Mammary epithelial cell (primary cell): ENCODE measurements at regions of chr16 and their contacts with region 1.

Region 1: DNA sequence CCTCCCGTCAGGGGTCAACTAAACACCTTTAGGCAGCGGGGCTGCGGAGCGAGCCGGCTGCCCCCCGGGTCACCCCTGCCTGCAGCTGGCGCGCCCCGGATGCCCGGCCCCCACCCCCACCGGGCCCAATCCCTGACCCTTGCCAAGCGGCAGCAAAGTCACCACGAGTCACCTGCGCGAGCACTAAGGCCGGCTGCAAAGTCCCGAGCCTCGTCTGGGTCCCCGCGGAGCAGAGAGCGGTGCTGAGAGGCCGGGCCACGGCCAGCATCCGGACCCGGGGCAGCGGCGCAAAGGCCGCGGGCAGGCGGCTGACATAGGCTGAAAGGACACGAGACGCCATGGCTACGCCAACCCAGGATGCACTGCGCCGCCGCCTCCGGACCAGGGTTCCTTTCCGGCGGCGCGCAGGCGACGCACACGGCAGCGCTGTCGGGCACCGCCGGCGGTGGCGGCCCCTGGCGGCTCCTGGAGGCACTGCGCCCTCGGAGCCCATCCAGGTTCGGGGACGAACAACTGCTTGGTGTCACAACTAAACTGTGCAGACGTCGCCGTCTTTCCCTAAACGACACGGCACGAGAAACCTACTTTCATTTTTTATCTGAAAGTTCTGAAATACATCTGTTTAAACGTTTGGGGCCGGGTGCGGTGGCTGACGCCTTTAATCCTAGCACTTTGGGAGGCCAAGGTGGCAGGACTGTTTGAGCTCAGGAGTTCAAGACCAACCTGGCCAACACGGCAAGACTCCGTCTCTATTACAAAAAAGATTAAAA is at the start of gene NDUFAB1:
- DNase-seq: peak; percentile 85
- H3K4me3 ChIP-seq: peak within 1 kb of the TSS; percentile 86 to 96 (median 88)
- H3K27ac ChIP-seq: peak within 1 kb of the TSS; percentile 60
- H3K4me1 ChIP-seq: peaks cover 7% of the 10 kb centered on the region
- H3K27me3 ChIP-seq: no peaks in the 10 kb centered on the region
- CTCF ChIP-seq: peak; percentile 90 to 94
- total RNA-seq, gene NDUFAB1: 70.2 to 86.6 TPM

Region 2: DNA sequence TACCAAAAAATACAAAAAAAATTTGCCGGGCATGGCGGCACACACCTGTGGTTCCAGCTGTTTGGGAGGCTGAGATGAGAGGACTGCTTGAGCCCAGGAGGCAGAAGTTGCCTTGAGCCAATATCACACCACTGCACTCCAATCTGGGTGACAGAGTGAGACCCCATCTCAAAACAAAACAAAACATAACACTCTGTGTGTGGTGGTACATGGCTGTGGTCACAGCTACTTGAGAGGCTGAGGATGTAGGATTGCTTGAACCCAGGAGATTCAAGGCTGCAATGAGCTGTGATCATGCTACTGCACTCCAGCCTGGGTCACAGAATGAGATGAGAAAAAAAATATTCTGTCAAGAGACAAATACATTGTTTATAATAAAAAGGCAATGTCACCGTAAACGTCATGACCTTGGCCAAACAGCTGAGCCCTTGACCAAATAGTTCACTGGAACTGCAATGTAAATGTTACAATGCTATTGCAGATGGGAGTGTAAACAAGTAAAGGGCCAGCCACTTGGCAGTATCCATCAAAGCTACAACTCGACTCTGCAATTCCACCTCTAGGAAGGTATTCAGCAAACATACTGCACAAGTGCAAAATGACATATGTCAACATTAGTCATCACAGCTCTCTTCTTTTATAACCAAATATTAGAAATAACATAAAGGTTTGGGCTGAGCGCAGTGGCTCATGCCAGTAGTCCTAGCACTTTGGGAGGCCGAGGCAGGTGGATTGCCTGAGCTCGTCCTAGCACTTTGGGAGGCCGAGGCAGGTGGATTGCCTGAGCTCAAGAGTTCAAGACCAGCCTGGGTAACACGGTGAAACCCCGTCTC is 55.9 kb before region 1 on chr16:
- CTCF ChIA-PET with region 1: no interaction called
- dilution Hi-C with region 1: loop called (anchors 5 kb)
- in situ Hi-C with region 1: no loop called
- intact Hi-C with region 1: no loop called
- DNase-seq: no peak
- H3K4me3 ChIP-seq: no peak overlapping the region
- H3K27ac ChIP-seq: no peak overlapping the region
- H3K4me1 ChIP-seq: peaks cover 18% of the 10 kb centered on the region
- H3K27me3 ChIP-seq: no peaks in the 10 kb centered on the region
- CTCF ChIP-seq: no peak

Region 3: GRCh38 chr16:23556881-23557778 is 39.0 kb before region 1 on chr16 and contains the starts of genes EARS2 and UBFD1:
- CTCF ChIA-PET with region 1: interaction called, 3 read pairs
- dilution Hi-C with region 1: no loop called
- in situ Hi-C with region 1: no loop called
- intact Hi-C with region 1: loop called (anchors 1 kb)
- DNase-seq: peak; percentile 99
- H3K4me3 ChIP-seq: peak within 1 kb of the TSS; percentile 92 to 96 (median 95)
- H3K27ac ChIP-seq: peak within 1 kb of the TSS; percentile 91
- H3K4me1 ChIP-seq: peaks cover 11% of the 10 kb centered on the region
- H3K27me3 ChIP-seq: no peaks in the 10 kb centered on the region
- CTCF ChIP-seq: peak; percentile 75 to 96
- total RNA-seq, gene EARS2: 30.1 to 47.7 TPM
- total RNA-seq, gene UBFD1: 57.3 to 79.7 TPM